ENCODE measurements at regions of chr6 and their contacts with region 1.

Region 1: DNA sequence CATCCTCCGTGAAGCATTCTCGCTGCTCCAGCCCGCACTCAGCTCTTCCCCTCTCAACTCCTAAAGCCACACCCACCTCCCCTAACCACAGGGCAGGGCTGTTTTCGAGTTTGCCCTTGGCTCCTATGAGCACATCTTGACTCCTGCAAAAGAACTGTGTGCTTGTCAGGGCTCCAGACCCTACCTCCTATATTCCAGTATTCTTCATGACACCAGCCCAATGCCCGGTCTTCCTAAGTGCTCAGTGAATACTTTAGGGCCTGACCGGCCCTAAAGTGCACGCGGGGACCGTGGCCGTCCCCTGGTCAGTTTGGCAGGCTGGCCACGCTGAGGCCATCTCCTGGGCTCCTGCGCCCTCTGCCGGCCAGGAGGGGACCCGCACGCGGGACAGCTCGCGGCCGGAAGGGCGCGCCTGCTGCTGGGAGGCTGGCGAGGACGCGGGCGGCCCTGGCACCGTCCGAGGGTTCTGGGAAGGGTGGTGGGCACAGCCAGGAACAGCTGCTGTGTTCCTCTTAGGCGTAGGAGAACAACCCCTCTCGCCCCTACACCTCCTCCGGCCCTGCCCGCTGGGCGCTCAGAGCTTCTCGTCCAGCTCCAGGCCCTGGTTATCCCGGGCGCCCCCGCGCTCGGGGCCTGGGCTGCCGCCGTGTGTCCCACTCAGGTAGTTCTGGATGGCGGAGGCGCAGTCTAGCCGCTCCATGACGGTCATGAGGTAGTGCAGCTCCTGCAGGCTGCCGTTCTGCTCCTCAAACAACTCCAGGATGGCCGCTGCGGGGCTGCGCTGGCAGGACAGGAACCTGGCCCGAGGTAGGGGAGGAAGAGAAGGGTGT is 11.0 kb downstream of the UNC5CL start:
- H3K4me3 ChIP-seq: peak overlapping the region; percentile 41
- H3K27ac ChIP-seq: no peak overlapping the region; the same call in 1 of the 2 replicates
- H3K4me1 ChIP-seq: peaks cover 2% of the 10 kb centered on the region
- CTCF ChIP-seq: peak; percentile 98

Region 2: DNA sequence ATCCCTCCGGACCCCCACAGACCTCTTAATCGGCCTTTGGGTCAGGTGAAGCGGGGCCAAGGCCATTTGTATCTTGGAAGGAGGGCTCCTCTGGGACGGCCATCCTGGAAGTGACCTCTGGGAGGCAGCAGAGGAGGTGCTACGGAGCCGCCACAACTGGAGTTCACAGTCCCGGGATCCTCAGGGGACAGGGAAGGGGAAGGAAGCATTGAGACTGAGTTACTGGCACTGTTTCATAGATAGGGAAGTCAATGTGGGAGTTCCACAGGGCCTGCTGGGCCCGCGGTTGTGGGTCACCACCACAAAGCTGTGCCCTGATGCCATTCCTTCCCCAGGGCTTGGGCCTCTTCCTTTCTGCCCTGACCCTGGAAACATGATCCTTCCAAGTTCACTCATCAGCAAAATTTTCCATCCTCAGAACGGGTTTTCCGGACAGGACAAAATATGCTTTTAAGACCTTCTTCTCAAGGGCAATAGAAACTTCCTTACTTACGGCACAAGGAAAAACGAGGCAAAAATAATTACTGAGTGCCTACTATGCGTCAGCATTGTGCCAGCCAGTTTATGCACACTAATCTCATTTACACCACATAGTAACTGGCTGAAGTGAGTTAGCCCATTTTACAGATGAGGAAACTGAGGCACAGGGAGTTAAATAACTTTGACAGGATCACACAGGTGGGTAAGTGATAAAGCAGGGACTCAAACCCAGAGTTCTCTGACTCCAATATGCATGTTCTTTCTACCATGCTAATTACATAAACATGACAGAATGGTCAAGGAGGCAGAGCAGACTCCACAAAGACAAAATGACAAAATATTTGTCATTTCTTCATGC is 132.8 kb before region 1 on chr6:
- CTCF ChIA-PET with region 1: interaction called, 145 read pairs
- POLR2A ChIA-PET with region 1: interaction called, 4 read pairs
- H3K4me3 ChIP-seq: no peak overlapping the region
- H3K27ac ChIP-seq: no peak overlapping the region
- H3K4me1 ChIP-seq: no peaks in the 10 kb centered on the region
- CTCF ChIP-seq: peak; percentile 68

Region 3: GRCh38 chr6:40999569-40999968 is 28.4 kb before region 1 on chr6:
- CTCF ChIA-PET with region 1: interaction called, 40 read pairs
- POLR2A ChIA-PET with region 1: no interaction called
- H3K4me3 ChIP-seq: no peak overlapping the region
- H3K27ac ChIP-seq: no peak overlapping the region
- H3K4me1 ChIP-seq: peaks cover 20% of the 10 kb centered on the region
- CTCF ChIP-seq: peak; percentile 63; the same call in 1 of the 2 replicates

Region 4: GRCh38 chr6:41013466-41014153 is 14.4 kb before region 1 on chr6:
- CTCF ChIA-PET with region 1: interaction called, 35 read pairs
- POLR2A ChIA-PET with region 1: no interaction called
- H3K4me3 ChIP-seq: no peak overlapping the region
- H3K27ac ChIP-seq: no peak overlapping the region
- H3K4me1 ChIP-seq: peaks cover 4% of the 10 kb centered on the region; the same call in 1 of the 2 replicates
- CTCF ChIP-seq: no peak

Region 5: DNA sequence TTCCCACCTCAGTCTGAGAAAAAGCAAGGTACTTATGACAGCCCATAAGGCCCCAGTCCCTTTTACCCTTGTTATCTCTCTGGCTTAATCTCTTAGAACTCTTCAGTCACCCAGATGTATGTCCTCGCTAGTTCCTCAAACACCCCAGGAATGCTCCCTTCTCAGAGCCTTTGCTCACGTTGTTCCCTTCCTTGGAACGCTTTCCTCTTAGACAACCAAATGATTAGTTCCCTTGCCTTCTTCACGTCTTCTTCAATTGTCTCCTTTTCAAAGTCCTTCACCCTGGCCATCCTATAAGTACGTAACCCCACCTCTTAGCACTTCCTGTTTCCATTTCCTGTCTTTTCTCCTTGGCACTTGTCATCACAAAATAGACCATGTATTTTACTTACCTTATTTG is 23.9 kb after region 1 on chr6:
- CTCF ChIA-PET with region 1: interaction called, 14 read pairs
- POLR2A ChIA-PET with region 1: no interaction called
- H3K4me3 ChIP-seq: no peak overlapping the region
- H3K27ac ChIP-seq: no peak overlapping the region
- H3K4me1 ChIP-seq: no peaks in the 10 kb centered on the region
- CTCF ChIP-seq: no peak

Region 6: GRCh38 chr6:41470331-41471063 is 442.5 kb after region 1 on chr6:
- CTCF ChIA-PET with region 1: no interaction called
- POLR2A ChIA-PET with region 1: no interaction called
- H3K4me3 ChIP-seq: no peak overlapping the region; the same call in 1 of the 2 replicates
- H3K27ac ChIP-seq: no peak overlapping the region
- H3K4me1 ChIP-seq: peaks cover 19% of the 10 kb centered on the region
- CTCF ChIP-seq: no peak